IMR-90 (cell line): ENCODE measurements at regions of chr3 and their contacts with region 1.

Region 1: DNA sequence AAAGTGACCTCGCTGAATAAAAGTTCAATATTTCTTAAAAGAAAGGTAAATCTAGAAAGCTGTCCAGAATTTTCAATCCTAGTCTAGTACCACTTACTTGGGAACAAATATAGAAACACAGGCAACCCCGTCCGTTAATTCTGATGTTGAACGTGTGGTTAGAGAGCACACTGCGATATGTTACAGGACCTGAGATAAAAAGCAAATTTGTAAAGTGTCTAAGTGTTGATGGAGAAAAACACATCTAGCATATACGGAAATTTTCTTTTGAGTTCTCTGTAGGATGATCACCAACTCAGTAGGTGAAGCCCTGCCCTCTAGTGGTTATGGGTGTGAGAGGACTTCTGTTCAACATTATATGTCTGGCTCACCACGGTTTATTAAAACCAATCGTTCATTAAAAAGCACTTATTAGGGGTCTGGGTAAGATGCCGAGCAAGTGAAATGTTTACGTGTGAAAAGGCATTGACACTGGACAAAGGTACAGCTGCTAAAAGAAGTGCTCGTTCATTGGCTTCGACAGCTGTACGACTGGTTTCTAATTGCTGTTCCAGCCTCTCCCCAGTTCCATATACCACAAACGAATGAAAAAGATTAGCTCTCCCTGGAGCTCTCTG is 1.0 kb upstream of the ATP2C1 start:
- DNase-seq: peak; percentile 79
- ATAC-seq: peak; percentile 36
- H3K4me3 ChIP-seq: peak overlapping the region; percentile 80
- H3K27ac ChIP-seq: peak overlapping the region; percentile 95
- H3K4me1 ChIP-seq: 0 out of 2 replicates have a peak, but pooled peaks cover 1% of the 10 kb centered on the region
- H3K27me3 ChIP-seq: no peaks in the 10 kb centered on the region
- CTCF ChIP-seq: peak; percentile 86
- POLR2A ChIP-seq: no peak
- RAD21 ChIP-seq: peak; percentile 65

Region 2: GRCh38 chr3:130276203-130276803 is 616.6 kb before region 1 on chr3:
- CTCF ChIA-PET with region 1: interaction called, 6 read pairs
- POLR2A ChIA-PET with region 1: no interaction called
- dilution Hi-C with region 1: no loop called
- in situ Hi-C with region 1: no loop called
- intact Hi-C with region 1: loop called (anchors 1 kb)
- DNase-seq: peak; percentile 61
- ATAC-seq: peak; percentile 96
- H3K4me3 ChIP-seq: no peak overlapping the region
- H3K27ac ChIP-seq: no peak overlapping the region
- H3K4me1 ChIP-seq: no peaks in the 10 kb centered on the region
- H3K27me3 ChIP-seq: no peaks in the 10 kb centered on the region
- CTCF ChIP-seq: peak; percentile 85
- POLR2A ChIP-seq: no peak
- RAD21 ChIP-seq: peak; percentile 76

Region 3: DNA sequence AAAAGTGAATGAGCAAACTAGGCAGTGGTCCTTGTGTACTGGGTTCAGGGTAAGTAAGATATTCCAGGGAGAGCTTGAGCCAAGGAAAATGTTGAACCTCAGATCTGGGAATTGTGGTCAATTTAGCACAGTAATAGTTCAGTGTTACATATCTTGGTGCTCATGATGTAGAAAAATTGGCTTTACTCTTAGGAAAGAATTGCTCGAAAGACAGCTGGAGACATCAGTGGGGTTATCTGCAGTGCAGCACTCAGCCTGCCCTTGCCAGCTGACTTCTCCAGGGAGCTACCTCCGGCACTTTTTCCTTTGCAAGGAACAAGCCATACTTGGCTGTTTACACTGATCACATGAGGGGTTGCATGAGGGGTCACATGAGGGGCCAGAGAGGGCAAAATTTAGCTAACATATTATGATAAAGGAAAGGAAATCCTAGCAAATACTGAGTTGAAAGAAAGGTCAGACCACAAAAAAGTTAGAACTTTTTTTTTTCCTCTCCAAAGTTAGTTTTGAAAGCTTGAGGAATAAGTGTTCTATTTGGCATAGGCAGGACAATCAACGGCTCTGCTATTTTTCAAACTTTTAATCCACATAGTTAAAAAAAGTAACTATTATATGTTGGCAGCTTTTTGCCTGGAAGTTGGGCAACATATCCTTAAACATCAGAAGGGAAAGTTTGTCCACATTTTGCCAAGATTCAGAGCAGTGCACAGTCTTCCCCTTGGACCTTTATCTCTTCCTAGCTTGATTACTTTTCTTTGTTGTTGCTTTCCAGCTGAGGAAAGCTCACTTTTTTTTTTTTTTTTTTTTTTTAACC is 283.5 kb before region 1 on chr3:
- CTCF ChIA-PET with region 1: no interaction called
- POLR2A ChIA-PET with region 1: no interaction called
- dilution Hi-C with region 1: no loop called
- in situ Hi-C with region 1: no loop called
- intact Hi-C with region 1: no loop called
- DNase-seq: no peak
- ATAC-seq: no peak
- H3K4me3 ChIP-seq: no peak overlapping the region
- H3K27ac ChIP-seq: no peak overlapping the region
- H3K4me1 ChIP-seq: no peaks in the 10 kb centered on the region
- H3K27me3 ChIP-seq: no peaks in the 10 kb centered on the region
- CTCF ChIP-seq: no peak
- POLR2A ChIP-seq: no peak
- RAD21 ChIP-seq: no peak

Region 4: GRCh38 chr3:130699765-130700164 is 193.1 kb before region 1 on chr3:
- CTCF ChIA-PET with region 1: no interaction called
- POLR2A ChIA-PET with region 1: no interaction called
- dilution Hi-C with region 1: no loop called
- in situ Hi-C with region 1: no loop called
- intact Hi-C with region 1: loop called (anchors 10 kb)
- DNase-seq: peak; percentile 9
- ATAC-seq: no peak
- H3K4me3 ChIP-seq: no peak overlapping the region
- H3K27ac ChIP-seq: no peak overlapping the region
- H3K4me1 ChIP-seq: no peaks in the 10 kb centered on the region
- H3K27me3 ChIP-seq: no peaks in the 10 kb centered on the region
- CTCF ChIP-seq: peak; percentile 46
- POLR2A ChIP-seq: no peak
- RAD21 ChIP-seq: peak; percentile 38; the same call in 1 of the 2 replicates

Region 5: DNA sequence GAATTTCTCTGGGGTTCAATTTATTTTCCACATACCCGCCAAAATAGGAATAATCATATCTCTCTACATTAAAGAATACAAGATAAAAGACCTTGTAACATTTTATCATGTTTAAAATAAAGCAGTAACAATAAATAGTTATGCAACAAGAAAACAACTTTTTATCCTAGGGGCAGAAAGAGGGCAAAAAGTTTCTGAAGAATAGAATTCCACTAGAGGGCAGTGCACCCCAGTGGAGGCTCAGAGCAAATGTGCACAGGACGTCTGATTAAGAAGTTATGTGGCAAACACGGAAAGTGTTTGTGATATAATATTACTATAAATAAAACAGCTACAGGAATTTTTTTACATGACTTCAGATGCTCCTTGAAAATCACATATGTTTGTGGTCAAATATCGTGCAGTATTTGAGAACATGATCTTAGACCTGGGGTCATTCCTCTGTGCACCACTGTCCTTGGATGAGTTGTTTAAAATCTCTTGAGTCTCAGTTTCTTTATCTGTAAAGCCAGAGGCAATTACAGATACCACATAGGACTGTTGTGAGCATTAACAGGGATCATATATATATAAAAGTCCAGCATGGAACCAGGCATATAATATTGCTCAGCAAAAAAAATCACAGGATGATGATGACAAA is 133.0 kb before region 1 on chr3:
- CTCF ChIA-PET with region 1: interaction called, 5 read pairs
- POLR2A ChIA-PET with region 1: no interaction called
- dilution Hi-C with region 1: no loop called
- in situ Hi-C with region 1: no loop called
- intact Hi-C with region 1: loop called (anchors 1 kb)
- DNase-seq: peak; percentile 49
- ATAC-seq: peak; percentile 92
- H3K4me3 ChIP-seq: no peak overlapping the region
- H3K27ac ChIP-seq: no peak overlapping the region
- H3K4me1 ChIP-seq: no peaks in the 10 kb centered on the region
- H3K27me3 ChIP-seq: peaks cover 2% of the 10 kb centered on the region; the same call in 1 of the 2 replicates
- CTCF ChIP-seq: peak; percentile 76
- POLR2A ChIP-seq: no peak
- RAD21 ChIP-seq: peak; percentile 72

Region 6: DNA sequence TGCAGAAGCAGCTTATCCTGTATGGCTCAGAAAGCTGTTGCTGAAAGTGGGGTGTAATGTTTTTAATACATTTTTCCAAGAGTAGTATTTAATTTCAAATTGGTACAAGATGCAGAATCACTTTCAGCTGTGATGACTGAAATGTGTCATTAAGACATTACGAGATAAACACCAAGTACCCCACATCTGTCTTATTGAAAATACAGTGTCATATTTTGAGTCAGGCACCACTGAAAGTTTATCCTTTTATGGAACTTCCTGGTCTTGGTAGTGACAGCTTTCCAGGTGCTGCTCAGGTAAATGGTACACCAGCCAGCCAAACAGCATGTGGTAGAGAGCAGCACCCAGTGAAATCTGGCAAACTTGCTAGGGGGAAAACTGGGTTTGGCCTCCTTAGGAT is 116.8 kb after region 1 on chr3:
- CTCF ChIA-PET with region 1: no interaction called
- POLR2A ChIA-PET with region 1: interaction called, 3 read pairs
- dilution Hi-C with region 1: no loop called
- in situ Hi-C with region 1: no loop called
- intact Hi-C with region 1: loop called (anchors 5 kb)
- DNase-seq: no peak
- ATAC-seq: no peak
- H3K4me3 ChIP-seq: no peak overlapping the region
- H3K27ac ChIP-seq: no peak overlapping the region
- H3K4me1 ChIP-seq: peaks cover 2% of the 10 kb centered on the region; the same call in 1 of the 2 replicates
- H3K27me3 ChIP-seq: no peaks in the 10 kb centered on the region
- CTCF ChIP-seq: no peak
- POLR2A ChIP-seq: no peak
- RAD21 ChIP-seq: no peak

Region 7: DNA sequence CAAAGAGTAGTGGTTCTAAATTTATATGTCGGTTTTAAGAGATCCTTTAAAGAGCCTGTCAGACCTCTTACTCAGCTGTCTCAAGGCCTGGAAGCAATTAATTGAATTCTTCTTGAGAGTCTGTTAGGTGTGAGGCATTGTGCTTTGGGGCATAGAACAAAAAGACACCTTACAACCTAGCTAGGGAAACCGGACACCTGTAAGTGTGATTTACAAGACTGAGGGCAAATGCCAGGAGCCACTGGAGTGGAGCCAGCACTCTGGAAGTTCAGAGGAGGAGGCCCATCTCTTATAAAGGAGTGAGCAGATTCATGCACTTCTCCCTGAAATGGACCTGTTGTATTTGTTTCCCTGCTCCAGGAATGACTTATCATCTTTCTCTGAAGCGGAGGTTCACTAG is 391.0 kb after region 1 on chr3:
- CTCF ChIA-PET with region 1: no interaction called
- POLR2A ChIA-PET with region 1: no interaction called
- dilution Hi-C with region 1: no loop called
- in situ Hi-C with region 1: no loop called
- intact Hi-C with region 1: no loop called
- DNase-seq: no peak
- ATAC-seq: no peak
- H3K4me3 ChIP-seq: no peak overlapping the region
- H3K27ac ChIP-seq: no peak overlapping the region
- H3K4me1 ChIP-seq: no peaks in the 10 kb centered on the region
- H3K27me3 ChIP-seq: no peaks in the 10 kb centered on the region
- CTCF ChIP-seq: no peak
- POLR2A ChIP-seq: no peak
- RAD21 ChIP-seq: no peak

Region 8: GRCh38 chr3:131381444-131382291 is 488.8 kb after region 1 on chr3 and contains the start of gene NUDT16:
- CTCF ChIA-PET with region 1: no interaction called
- POLR2A ChIA-PET with region 1: no interaction called
- dilution Hi-C with region 1: no loop called
- in situ Hi-C with region 1: no loop called
- intact Hi-C with region 1: loop called (anchors 5 kb)
- DNase-seq: peak; percentile 98
- ATAC-seq: peak; percentile 99
- H3K4me3 ChIP-seq: peak within 1 kb of the TSS; percentile 87
- H3K27ac ChIP-seq: peak within 1 kb of the TSS; percentile 68
- H3K4me1 ChIP-seq: 0 out of 2 replicates have a peak, but pooled peaks cover 2% of the 10 kb centered on the region
- H3K27me3 ChIP-seq: no peaks in the 10 kb centered on the region
- CTCF ChIP-seq: no peak
- POLR2A ChIP-seq: peak; percentile 79
- RAD21 ChIP-seq: no peak
- total RNA-seq, gene NUDT16: 7.8 and 10.4 TPM in 2 replicates

Region 9: GRCh38 chr3:132004571-132004970 is 1111.7 kb after region 1 on chr3:
- CTCF ChIA-PET with region 1: no interaction called
- POLR2A ChIA-PET with region 1: no interaction called
- dilution Hi-C with region 1: no loop called
- in situ Hi-C with region 1: no loop called
- intact Hi-C with region 1: no loop called
- DNase-seq: no peak
- ATAC-seq: no peak
- H3K4me3 ChIP-seq: no peak overlapping the region
- H3K27ac ChIP-seq: no peak overlapping the region
- H3K4me1 ChIP-seq: no peaks in the 10 kb centered on the region
- H3K27me3 ChIP-seq: no peaks in the 10 kb centered on the region
- CTCF ChIP-seq: no peak
- POLR2A ChIP-seq: no peak
- RAD21 ChIP-seq: no peak